ENCODE measurements at regions of chr2 and their contacts with region 1.

Region 1: DNA sequence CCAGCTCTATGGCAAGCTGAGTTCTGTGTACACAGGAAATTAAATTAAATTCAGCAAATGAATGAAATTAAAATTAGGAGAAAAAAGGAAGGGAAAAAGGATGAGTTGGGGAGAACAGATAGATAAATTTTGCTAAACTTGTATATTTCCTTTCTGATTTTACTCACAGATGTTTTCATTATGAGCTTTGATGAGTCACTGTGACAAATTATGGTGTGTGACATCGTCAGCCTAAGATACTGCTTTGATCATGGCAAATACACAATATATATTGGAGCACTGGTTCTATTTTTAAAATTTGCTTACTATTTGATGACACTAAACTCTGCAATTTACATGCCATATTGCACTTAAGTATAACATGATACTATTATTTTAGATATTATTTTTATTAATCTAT is 464.6 kb upstream of the SPHKAP start:
- DNase-seq: no peak
- ATAC-seq: no peak
- H3K4me3 ChIP-seq: no peak overlapping the region
- H3K27ac ChIP-seq: no peak overlapping the region
- H3K4me1 ChIP-seq: peaks cover 0 to 15% (median 0%) of the 10 kb centered on the region in 12 donors
- H3K27me3 ChIP-seq: no peaks in the 10 kb centered on the region
- CTCF ChIP-seq: no peak
- POLR2A ChIP-seq: no peak

Region 2: DNA sequence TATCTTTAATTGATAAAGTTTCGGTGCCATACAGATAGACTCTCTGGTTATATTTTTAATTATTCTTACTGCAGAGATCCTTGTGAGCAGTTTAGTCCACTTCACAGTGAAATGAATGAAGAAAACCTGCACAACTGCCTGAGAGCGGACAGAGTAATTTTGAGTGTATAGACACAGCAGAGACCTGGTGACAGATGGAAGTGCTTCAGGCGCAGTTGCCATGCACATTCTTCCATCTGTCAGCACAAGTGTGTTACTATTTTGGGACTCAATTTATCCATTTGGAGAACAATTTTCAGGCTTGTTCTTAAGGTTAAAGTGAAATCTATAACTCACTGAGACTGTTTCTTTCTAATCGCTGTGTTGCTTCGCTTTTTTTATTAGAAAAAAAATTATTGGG is 316.8 kb before region 1 on chr2:
- intact Hi-C with region 1: loop called in 2 of 10 experiments (anchors 5 kb)
- DNase-seq: peak in 4 of 5 donors; percentile 36 to 57 (median 52)
- ATAC-seq: peak; percentile 91 to 96 (median 94)
- H3K4me3 ChIP-seq: no peak overlapping the region
- H3K27ac ChIP-seq: peak overlapping the region in 9 of 12 donors; percentile 0 to 72 (median 62)
- H3K4me1 ChIP-seq: peaks cover 0 to 11% (median 0%) of the 10 kb centered on the region in 12 donors
- H3K27me3 ChIP-seq: no peaks in the 10 kb centered on the region
- CTCF ChIP-seq: no peak
- POLR2A ChIP-seq: no peak

Region 3: DNA sequence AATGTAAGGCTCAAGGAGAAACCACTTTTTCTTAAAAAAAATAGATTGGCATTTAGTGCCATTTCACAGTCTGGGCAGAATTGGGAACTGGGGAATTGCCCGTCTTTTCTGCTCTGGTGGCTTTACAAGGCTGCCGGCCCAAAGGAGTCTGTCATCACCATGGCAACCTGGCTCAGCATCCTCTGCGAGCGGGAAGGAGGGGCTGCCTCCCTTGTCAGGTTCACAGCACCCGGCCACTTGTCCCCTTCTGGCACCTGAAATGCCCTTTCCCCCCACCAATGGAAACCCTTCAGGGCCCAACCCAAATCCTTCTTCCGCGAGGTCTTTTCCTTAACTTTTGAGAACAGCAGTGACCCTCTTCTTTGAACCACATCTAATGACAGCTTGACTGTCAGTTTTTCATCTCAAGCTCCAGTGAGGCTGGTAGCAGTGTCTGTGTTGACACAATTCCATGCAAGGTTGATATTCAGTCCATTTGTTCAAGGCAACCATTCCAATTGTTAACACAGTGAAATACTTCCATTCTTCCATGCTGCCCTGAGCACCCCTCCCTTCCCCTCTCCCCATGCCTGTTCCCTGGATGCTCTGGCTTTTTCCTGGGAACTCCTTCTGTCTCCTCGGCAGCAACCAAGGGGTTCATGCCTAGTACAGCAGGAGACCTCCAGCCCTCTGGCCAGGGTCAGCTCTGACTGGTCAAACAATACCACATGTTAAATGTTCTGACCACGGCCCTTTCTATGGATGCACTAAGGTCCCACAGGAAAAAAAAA is 988.7 kb after region 1 on chr2:
- intact Hi-C with region 1: no loop called
- DNase-seq: no peak
- ATAC-seq: no peak
- H3K4me3 ChIP-seq: no peak overlapping the region
- H3K27ac ChIP-seq: no peak overlapping the region
- H3K4me1 ChIP-seq: no peaks in the 10 kb centered on the region
- H3K27me3 ChIP-seq: peaks cover 0 to 36% (median 4%) of the 10 kb centered on the region in 9 donors
- CTCF ChIP-seq: no peak
- POLR2A ChIP-seq: no peak